ENCODE measurements at regions of chrX and their contacts with region 1.

Region 1: GRCh38 chrX:53422086-53422860 is at the start of gene SMC1A:
- DNase-seq: peak; percentile 98 to 100 (median 99)
- H3K4me3 ChIP-seq: peak within 1 kb of the TSS; percentile 68 to 76
- H3K4me3 Mint-ChIP-seq: peak within 1 kb of the TSS; percentile 86 to 98 (median 94)
- H3K27ac ChIP-seq: peak within 1 kb of the TSS; percentile 90
- H3K27ac Mint-ChIP-seq: peak within 1 kb of the TSS; percentile 92 to 100 (median 99)
- H3K4me1 ChIP-seq: peaks cover 27% of the 10 kb centered on the region
- H3K4me1 Mint-ChIP-seq: peaks cover 21 to 45% (median 32%) of the 10 kb centered on the region in 4 donors
- H3K27me3 ChIP-seq: no peaks in the 10 kb centered on the region
- H3K27me3 Mint-ChIP-seq: no peaks in the 10 kb centered on the region
- total RNA-seq, gene SMC1A: 59.1 to 70.4 TPM

Region 2: GRCh38 chrX:53071604-53072417 is 350.5 kb before region 1 on chrX:
- CTCF ChIA-PET with region 1: no interaction called
- POLR2A ChIA-PET with region 1: interaction called, 3 read pairs
- intact Hi-C with region 1: loop called (anchors 10 kb)
- DNase-seq: peak; percentile 79 to 82 (median 81)
- H3K4me3 ChIP-seq: peak overlapping the region in 1 of 2 donors; percentile 52
- H3K4me3 Mint-ChIP-seq: peak overlapping the region; percentile 86 to 92 (median 90)
- H3K27ac ChIP-seq: no peak overlapping the region
- H3K27ac Mint-ChIP-seq: peak overlapping the region; percentile 68 to 95 (median 92)
- H3K4me1 ChIP-seq: peaks cover 9% of the 10 kb centered on the region
- H3K4me1 Mint-ChIP-seq: peaks cover 11 to 23% (median 14%) of the 10 kb centered on the region in 4 donors
- H3K27me3 ChIP-seq: no peaks in the 10 kb centered on the region
- H3K27me3 Mint-ChIP-seq: peaks cover 3% of the 10 kb centered on the region in 2 donors

Region 3: DNA sequence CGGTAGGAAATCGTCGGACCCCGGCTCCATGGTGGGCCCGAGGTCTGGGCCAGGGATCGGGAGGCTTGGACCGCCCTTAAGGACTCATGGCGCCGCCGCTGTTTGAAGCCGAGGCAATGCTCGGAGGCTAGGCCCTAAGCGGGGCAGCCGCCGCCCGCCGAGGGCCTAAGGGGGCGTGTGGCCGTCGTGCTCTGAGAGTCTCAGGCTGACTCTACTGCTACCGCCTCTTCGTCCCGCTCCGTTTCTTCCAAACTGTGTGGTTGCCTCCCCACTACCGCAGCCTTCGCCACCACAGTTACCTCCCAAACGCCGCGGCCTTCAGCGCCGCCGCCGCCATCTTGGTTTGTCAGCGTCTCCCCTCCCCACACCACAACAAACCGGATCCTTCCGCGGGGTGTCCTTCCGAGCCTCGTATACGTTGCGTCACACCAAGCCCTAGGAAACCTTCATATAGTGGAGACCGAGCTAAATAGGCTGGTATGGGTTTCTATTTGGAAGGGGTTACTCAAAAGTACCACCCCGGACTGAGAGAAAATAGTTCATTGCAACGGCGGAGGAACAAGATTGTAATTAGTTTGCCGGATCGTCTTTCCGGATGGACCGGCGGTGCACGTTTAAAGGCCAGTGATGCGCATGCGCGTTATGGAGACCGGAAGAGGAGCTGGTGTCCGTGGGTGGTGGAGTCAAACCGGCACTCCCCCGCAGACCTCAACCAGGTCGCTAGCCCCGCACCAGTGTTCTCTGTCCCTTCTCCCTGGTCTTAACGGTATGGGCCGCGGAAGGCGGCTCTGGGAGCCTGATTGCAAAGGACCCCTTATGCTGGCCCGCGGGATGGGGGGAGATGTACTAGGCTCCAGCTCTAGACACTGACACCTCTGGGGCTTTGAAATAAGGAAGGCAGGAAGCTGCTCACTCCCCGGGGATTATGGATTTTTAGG is 197.1 kb before region 1 on chrX and contains the start of gene KDM5C:
- CTCF ChIA-PET with region 1: no interaction called
- POLR2A ChIA-PET with region 1: interaction called, 12 read pairs
- intact Hi-C with region 1: loop called (anchors 2 kb)
- DNase-seq: peak; percentile 90 to 96 (median 96)
- H3K4me3 ChIP-seq: peak within 1 kb of the TSS; percentile 65 to 88
- H3K4me3 Mint-ChIP-seq: peak within 1 kb of the TSS; percentile 97 to 100 (median 99)
- H3K27ac ChIP-seq: peak within 1 kb of the TSS; percentile 97
- H3K27ac Mint-ChIP-seq: peak within 1 kb of the TSS; percentile 98 to 100 (median 99)
- H3K4me1 ChIP-seq: peaks cover 35% of the 10 kb centered on the region
- H3K4me1 Mint-ChIP-seq: peaks cover 24 to 52% (median 39%) of the 10 kb centered on the region in 4 donors
- H3K27me3 ChIP-seq: no peaks in the 10 kb centered on the region
- H3K27me3 Mint-ChIP-seq: peaks cover 0 to 2% of the 10 kb centered on the region in 2 donors
- total RNA-seq, gene KDM5C: 120 to 127 TPM

Region 4: DNA sequence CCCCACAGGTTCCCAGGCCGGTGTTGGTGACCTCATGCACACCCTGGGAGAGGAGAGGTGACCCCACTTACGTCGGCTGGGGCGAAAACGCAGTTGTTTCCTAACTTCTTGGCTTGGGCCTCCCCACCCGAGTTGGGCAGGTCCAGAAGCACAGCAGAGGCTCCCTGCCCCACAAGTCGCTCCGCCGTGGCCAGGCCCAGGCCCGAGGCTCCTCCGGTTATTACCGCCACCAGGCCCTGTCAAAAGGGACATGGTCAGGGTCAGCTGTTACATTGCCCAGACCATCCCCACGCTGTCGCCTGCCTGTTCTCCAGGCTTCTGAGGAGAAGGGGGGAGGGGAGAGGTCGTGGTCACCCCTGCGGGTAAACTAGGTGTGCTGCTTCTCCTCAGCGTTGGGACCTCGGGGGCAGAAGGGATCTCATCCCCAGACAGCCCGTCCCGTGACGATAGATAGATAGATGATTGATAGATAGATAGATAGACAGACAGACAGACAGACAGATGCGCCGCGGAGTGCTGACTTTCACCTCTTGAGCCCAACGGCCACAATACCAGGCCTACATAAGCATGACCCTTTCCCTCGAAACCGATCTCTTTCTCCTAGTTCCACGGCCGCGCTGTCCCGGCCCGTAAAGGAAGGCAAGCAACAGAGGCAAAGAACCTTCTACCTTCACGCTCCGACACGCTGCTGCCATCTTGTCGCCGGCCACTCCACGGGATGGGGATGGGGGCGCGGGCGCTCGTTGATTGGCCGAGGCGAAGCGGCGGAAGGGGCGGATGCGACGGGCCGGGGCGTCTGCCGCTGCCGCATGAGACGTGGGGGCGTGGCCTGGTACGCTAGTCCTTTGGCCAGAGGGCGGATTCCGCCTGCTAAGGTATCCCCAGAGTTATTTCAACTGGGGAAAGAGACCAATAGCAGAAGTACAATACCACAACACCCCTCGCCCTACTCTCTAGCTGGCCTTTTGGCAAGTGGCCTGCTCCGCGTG is 11.7 kb after region 1 on chrX and contains the start of gene HSD17B10:
- CTCF ChIA-PET with region 1: interaction called, 3 read pairs
- POLR2A ChIA-PET with region 1: interaction called, 24 read pairs
- intact Hi-C with region 1: loop called (anchors 1 kb)
- DNase-seq: peak; percentile 81 to 85 (median 85)
- H3K4me3 ChIP-seq: peak within 1 kb of the TSS; percentile 47 to 72
- H3K4me3 Mint-ChIP-seq: peak within 1 kb of the TSS; percentile 88 to 98 (median 94)
- H3K27ac ChIP-seq: peak within 1 kb of the TSS; percentile 75
- H3K27ac Mint-ChIP-seq: peak within 1 kb of the TSS; percentile 88 to 99 (median 95)
- H3K4me1 ChIP-seq: peaks cover 15% of the 10 kb centered on the region
- H3K4me1 Mint-ChIP-seq: peaks cover 7 to 21% (median 14%) of the 10 kb centered on the region in 4 donors
- H3K27me3 ChIP-seq: no peaks in the 10 kb centered on the region
- H3K27me3 Mint-ChIP-seq: peaks cover 0 to 2% of the 10 kb centered on the region in 2 donors
- total RNA-seq, gene HSD17B10: 32.6 to 32.8 TPM

Region 5: GRCh38 chrX:53683556-53684414 is 261.5 kb after region 1 on chrX:
- CTCF ChIA-PET with region 1: no interaction called
- POLR2A ChIA-PET with region 1: interaction called, 4 read pairs
- intact Hi-C with region 1: loop called (anchors 5 kb)
- DNase-seq: peak; percentile 88 to 97 (median 95)
- H3K4me3 ChIP-seq: peak overlapping the region; percentile 65 to 66
- H3K4me3 Mint-ChIP-seq: peak overlapping the region; percentile 88 to 97 (median 90)
- H3K27ac ChIP-seq: peak overlapping the region; percentile 94
- H3K27ac Mint-ChIP-seq: peak overlapping the region; percentile 87 to 99 (median 97)
- H3K4me1 ChIP-seq: peaks cover 41% of the 10 kb centered on the region
- H3K4me1 Mint-ChIP-seq: peaks cover 16 to 52% (median 33%) of the 10 kb centered on the region in 4 donors
- H3K27me3 ChIP-seq: no peaks in the 10 kb centered on the region
- H3K27me3 Mint-ChIP-seq: no peaks in the 10 kb centered on the region

Region 6: DNA sequence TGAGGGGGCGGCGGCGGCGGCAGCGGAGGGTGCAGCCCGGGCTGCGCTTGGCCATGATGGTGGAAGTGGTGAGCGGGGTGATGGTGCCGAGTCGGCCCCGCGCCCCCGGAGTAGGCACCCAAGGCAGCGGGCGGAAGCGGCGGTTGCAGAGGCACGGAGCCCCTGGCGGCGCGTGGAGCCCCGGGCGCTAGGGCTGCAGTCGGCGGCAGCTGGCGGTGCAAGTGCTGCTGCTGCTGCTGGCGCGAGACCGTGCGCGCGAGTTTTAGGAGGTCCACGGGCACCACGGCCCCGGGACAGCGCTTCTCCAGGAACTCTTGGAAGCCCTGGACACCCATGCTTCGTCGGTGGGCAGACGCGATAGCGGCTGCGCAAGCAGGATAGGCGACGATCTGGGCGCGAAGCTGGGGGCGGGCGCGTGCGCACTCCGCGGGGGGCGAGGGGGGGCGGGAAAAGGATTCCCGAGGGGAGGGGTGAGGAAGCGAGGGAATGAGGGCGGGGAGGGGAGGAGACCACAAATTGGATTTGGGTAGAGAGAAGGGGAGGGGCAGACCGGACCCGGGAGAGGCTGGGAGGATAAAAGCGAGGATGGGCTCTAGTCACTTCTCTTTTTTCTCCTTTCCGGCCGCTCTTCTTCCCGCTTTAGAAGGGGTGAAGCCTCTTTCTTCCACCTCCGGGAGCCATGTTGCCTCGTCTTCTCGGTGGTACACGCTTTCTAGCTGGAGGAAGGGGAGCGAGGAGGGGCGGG is 760.8 kb after region 1 on chrX and contains the start of gene FAM120C:
- CTCF ChIA-PET with region 1: no interaction called
- POLR2A ChIA-PET with region 1: no interaction called
- intact Hi-C with region 1: loop called (anchors 2 kb)
- DNase-seq: peak; percentile 62 to 66 (median 65)
- H3K4me3 ChIP-seq: peak within 1 kb of the TSS; percentile 20 to 63
- H3K4me3 Mint-ChIP-seq: peak within 1 kb of the TSS; percentile 84 to 92 (median 86)
- H3K27ac ChIP-seq: peak within 1 kb of the TSS; percentile 72
- H3K27ac Mint-ChIP-seq: peak within 1 kb of the TSS; percentile 74 to 92 (median 89)
- H3K4me1 ChIP-seq: peaks cover 29% of the 10 kb centered on the region
- H3K4me1 Mint-ChIP-seq: peaks cover 31 to 47% (median 39%) of the 10 kb centered on the region in 4 donors
- H3K27me3 ChIP-seq: no peaks in the 10 kb centered on the region
- H3K27me3 Mint-ChIP-seq: no peaks in the 10 kb centered on the region
- total RNA-seq, gene FAM120C: 17.6 to 21.1 TPM

Measured in CD4-positive, alpha-beta memory T cell (primary cell).